Tibial artery (tissue), 4 donors: ENCODE measurements at regions of chr11 and their contacts with region 1.

Region 1: GRCh38 chr11:11044137-11044855 is 186.4 kb upstream of the ZBED5 start:
- DNase-seq: no peak
- H3K4me3 ChIP-seq: no peak overlapping the region
- H3K27ac ChIP-seq: no peak overlapping the region
- H3K4me1 ChIP-seq: peaks cover 0 to 4% (median 1%) of the 10 kb centered on the region in 4 donors
- H3K27me3 ChIP-seq: no peaks in the 10 kb centered on the region
- CTCF ChIP-seq: no peak

Region 2: GRCh38 chr11:11635443-11635842 is 591.1 kb after region 1 on chr11:
- intact Hi-C with region 1: loop called (anchors 10 kb)
- DNase-seq: no peak
- H3K4me3 ChIP-seq: no peak overlapping the region
- H3K27ac ChIP-seq: no peak overlapping the region
- H3K4me1 ChIP-seq: no peaks in the 10 kb centered on the region
- H3K27me3 ChIP-seq: no peaks in the 10 kb centered on the region
- CTCF ChIP-seq: no peak